PC-9 (cell line): ENCODE measurements at regions of chr7 and their contacts with region 1.

Region 1: GRCh38 chr7:83190659-83191389 is 28.1 kb upstream of the PCLO start:
- DNase-seq: no peak
- H3K4me3 ChIP-seq: no peak overlapping the region
- H3K27ac ChIP-seq: no peak overlapping the region
- H3K4me1 ChIP-seq: no peaks in the 10 kb centered on the region
- H3K27me3 ChIP-seq: no peaks in the 10 kb centered on the region
- CTCF ChIP-seq: no peak

Region 2: DNA sequence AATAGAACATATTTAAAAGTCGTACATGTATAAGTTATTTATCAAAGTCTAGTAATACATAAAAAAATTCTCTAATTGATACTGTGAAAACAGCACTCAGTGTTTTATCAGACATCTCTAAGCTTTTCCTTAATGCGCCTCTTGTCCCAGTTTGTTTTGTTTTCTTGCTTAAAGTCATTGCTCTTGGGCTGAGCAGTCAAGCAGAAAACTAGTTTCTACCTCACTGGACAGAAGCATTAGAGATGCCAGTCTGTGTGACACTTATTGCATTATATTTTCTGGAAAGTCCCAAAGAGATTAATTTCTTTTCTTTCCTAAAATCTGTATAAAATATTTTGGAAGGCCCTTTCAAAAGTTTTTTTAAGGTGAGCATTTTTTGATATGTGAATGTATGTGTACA is 264.3 kb before region 1 on chr7:
- CTCF ChIA-PET with region 1: no interaction called
- POLR2A ChIA-PET with region 1: interaction called, 10 read pairs
- intact Hi-C with region 1: no loop called
- DNase-seq: no peak
- H3K4me3 ChIP-seq: no peak overlapping the region
- H3K27ac ChIP-seq: no peak overlapping the region
- H3K4me1 ChIP-seq: no peaks in the 10 kb centered on the region
- H3K27me3 ChIP-seq: no peaks in the 10 kb centered on the region
- CTCF ChIP-seq: no peak

Region 3: DNA sequence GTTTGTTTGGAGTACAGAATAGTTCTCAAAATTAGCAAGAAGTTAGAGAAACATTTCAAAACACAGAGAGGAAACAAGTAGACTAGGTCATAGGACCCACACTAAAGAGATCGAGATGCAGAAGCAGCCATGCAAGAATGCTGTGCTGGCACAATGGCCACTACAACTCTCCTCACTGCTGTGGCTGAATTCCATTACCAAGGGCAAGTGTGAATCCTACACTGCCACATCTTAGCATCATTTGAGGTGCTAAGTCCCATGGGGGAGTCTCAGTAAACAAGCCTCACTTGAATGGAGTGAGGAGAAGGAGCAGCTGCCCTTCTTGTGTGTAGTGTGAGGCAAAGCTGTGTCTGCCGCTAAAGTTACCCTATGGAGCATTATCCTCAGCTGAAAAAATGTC is 84.9 kb before region 1 on chr7:
- CTCF ChIA-PET with region 1: no interaction called
- POLR2A ChIA-PET with region 1: no interaction called
- intact Hi-C with region 1: no loop called
- DNase-seq: no peak
- H3K4me3 ChIP-seq: no peak overlapping the region
- H3K27ac ChIP-seq: no peak overlapping the region
- H3K4me1 ChIP-seq: no peaks in the 10 kb centered on the region
- H3K27me3 ChIP-seq: no peaks in the 10 kb centered on the region
- CTCF ChIP-seq: no peak

Region 4: GRCh38 chr7:83173664-83174063 is 17.2 kb before region 1 on chr7:
- CTCF ChIA-PET with region 1: no interaction called
- POLR2A ChIA-PET with region 1: no interaction called
- intact Hi-C with region 1: loop called (anchors 1 kb)
- DNase-seq: no peak
- H3K4me3 ChIP-seq: no peak overlapping the region
- H3K27ac ChIP-seq: no peak overlapping the region
- H3K4me1 ChIP-seq: no peaks in the 10 kb centered on the region
- H3K27me3 ChIP-seq: no peaks in the 10 kb centered on the region
- CTCF ChIP-seq: no peak